Dendritic cell treated with granulocyte-macrophage colony-stimulating factor and Interleukin-4, amounts not matched to agents 40 ng/mL and 50 ng/mL, for 4 days (primary cell): ENCODE measurements at regions of chr3 and their contacts with region 1.

Region 1: GRCh38 chr3:140972833-140973232 is 31.2 kb downstream of the SLC25A36 start:
- H3K4me3 Mint-ChIP-seq: no peak overlapping the region
- H3K27ac Mint-ChIP-seq: no peak overlapping the region
- H3K4me1 Mint-ChIP-seq: no peaks in the 10 kb centered on the region
- H3K27me3 Mint-ChIP-seq: no peaks in the 10 kb centered on the region

Region 2: DNA sequence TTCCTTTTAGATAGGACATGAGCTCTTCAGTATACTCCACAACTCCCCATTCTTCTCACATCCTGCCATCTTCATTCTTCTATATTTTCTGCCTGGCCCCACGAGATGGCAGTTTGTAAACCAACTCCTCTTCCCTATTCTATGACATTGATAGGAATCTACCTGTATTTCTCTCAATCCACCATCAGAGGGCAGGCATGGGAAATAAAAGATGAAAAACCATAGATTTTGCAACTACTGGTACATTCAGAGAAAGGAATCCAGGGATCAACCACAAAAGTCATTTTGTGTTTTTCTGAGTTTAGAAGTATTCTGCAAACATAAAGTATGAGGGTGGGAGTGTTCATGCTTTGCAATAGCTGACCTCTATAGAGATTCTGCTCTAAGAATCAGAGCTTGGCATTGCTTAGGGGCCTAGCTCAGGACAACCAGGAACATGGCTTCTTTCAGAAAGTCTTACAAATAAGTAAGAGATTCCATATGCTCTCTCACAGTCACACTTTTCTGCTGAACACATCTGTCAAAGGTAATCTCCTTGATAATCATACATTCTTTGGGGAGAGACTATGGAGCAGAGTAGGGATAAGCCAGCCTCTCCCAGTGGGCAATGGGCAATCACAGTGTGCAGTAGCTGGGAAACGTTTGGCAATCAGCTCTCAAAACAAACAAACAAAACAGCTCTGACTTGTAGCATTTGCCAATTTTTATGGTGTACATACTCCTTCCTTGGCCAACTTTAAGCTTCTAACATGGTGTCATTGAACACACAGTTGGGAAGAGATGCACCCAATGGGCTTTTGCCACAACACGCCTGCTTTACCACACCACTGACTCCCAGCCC is 74.3 kb before region 1 on chr3:
- intact Hi-C with region 1: loop called (anchors 1 kb)
- H3K4me3 Mint-ChIP-seq: no peak overlapping the region
- H3K27ac Mint-ChIP-seq: no peak overlapping the region
- H3K4me1 Mint-ChIP-seq: peaks cover 4% of the 10 kb centered on the region
- H3K27me3 Mint-ChIP-seq: no peaks in the 10 kb centered on the region

Region 3: DNA sequence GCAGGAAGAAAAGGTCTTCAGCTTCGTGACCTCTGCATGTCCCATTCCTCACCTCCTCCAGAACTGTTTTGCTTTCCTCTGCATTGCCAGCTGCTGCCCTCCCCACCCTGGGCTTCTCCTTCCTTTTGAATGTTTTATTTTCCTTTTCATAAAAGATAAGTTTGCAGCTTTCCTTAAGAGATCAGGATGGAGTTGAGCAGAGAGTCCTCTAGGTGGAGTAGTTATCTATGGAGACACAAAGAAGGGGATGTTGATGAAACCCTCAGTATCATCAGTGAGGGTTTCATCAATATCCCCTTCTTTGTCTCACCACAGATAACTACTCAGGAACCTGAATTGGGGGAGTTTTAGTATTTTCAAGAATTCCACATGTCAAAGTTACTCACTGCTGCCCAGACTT is 50.2 kb before region 1 on chr3:
- intact Hi-C with region 1: loop called (anchors 5 kb)
- H3K4me3 Mint-ChIP-seq: no peak overlapping the region
- H3K27ac Mint-ChIP-seq: no peak overlapping the region
- H3K4me1 Mint-ChIP-seq: no peaks in the 10 kb centered on the region
- H3K27me3 Mint-ChIP-seq: no peaks in the 10 kb centered on the region